Right ventricle myocardium inferior (tissue), 1 donor: ENCODE measurements at regions of chr3 and their contacts with region 1.

Region 1: DNA sequence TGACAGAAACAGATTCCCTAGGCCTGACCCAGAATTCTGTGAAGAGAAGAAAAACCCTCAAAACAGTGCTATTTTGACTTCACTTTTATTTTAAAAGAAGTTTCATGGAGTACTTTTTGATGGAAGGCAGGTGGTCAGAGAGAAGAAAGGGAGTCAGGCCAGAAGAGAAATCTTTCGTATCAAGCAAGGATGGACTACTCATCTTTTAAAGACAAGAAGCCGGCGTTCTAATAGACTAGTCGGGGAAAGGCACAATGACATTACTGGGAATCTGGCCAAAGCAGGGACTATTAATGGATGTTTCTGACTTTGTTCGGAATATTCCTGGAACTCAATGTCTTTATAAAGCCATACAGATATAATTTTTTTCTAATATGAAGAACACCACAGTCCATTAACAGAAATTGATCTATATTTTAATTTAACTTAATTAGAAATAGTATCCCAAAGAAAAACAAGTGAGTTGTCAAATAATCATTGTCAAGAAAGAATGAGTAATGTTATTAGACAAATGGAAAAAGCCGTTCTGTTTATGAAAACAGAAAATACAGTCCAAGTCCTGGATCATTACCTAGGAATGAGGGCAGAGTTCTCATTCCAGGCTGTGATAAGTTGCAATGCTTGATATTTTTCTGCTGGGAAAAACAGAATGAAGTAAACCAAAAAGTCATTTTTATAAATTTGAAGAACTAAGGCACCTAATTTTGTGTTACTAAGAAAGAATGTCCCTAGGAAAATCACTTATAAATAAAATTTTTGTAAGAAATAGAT is 23.7 kb upstream of the PCOLCE2 start:
- DNase-seq: no peak
- ATAC-seq: peak; percentile 58

Region 2: DNA sequence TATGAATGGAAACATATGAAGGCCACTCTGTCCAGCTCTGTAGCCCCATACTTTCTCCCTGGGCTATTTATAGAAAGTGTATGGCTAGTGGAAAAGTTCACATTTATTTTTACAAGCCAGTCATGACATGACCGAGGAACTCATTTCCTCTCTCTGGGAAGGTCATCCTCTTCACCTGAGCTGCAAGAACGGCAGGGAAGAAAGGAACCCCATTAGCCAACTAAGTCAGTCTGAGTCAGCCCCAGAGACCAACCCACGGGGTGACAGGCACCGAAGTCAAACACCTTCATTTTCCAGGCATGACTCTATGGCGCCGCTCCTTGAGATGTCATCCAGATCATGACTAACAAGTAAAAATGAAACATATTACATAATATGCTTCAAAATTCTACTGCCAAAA is 46.1 kb after region 1 on chr3:
- intact Hi-C with region 1: loop called (anchors 5 kb)
- DNase-seq: no peak
- ATAC-seq: peak; percentile 26